ENCODE measurements at regions of chr14 and their contacts with region 1.

Region 1: DNA sequence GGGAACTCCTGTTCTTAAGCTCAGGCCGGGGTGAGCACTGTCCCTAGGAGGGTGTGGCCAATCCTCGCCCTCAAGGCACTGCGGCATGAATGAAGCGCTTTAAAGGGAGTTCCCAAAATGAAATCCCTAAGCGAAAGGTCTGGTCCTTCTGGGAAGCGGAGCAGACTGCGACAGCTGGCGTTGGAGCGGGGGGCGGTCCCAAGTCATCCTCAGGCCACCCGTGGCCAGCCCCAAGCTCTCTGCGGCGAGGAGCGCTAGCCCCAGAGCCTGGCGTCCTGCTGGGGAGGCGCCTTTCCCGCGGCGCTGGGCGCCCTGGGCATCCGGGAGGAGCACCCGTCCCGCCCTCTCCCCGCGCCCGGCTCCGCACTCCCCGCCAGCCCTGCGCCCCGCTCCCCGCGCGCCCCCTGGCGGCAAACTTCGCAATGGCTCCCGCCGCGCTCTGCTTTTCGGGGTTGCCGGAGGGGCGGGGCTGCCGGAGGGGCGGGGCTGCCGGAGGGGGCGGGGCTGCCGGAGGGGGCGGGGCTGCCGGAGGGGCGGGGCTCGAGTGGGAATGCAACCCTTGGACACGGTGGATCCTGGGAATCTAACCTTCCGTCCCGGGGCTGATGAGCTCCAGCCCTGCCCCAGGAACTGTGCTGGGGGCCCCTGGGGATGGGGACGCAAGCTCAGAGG is 25.4 kb downstream of the ZBTB42 start:
- DNase-seq: peak; percentile 88 to 97 (median 90)
- H3K4me3 ChIP-seq: peak overlapping the region; percentile 61 to 70
- H3K4me3 Mint-ChIP-seq: peak overlapping the region; percentile 66 to 93 (median 86)
- H3K27ac ChIP-seq: peak overlapping the region; percentile 14
- H3K27ac Mint-ChIP-seq: peak overlapping the region in 4 of 7 donors; percentile 29 to 92 (median 63)
- H3K4me1 ChIP-seq: peaks cover 21% of the 10 kb centered on the region
- H3K4me1 Mint-ChIP-seq: peaks cover 14 to 32% (median 24%) of the 10 kb centered on the region in 4 donors
- H3K27me3 ChIP-seq: no peaks in the 10 kb centered on the region
- H3K27me3 Mint-ChIP-seq: peaks cover 2 to 7% of the 10 kb centered on the region in 2 donors

Region 2: GRCh38 chr14:104576232-104576969 is 249.9 kb before region 1 on chr14:
- CTCF ChIA-PET with region 1: no interaction called
- POLR2A ChIA-PET with region 1: no interaction called
- intact Hi-C with region 1: no loop called
- DNase-seq: no peak
- H3K4me3 ChIP-seq: no peak overlapping the region
- H3K4me3 Mint-ChIP-seq: no peak overlapping the region
- H3K27ac ChIP-seq: no peak overlapping the region
- H3K27ac Mint-ChIP-seq: no peak overlapping the region
- H3K4me1 ChIP-seq: no peaks in the 10 kb centered on the region
- H3K4me1 Mint-ChIP-seq: no peaks in the 10 kb centered on the region
- H3K27me3 ChIP-seq: no peaks in the 10 kb centered on the region
- H3K27me3 Mint-ChIP-seq: peaks cover 4 to 8% of the 10 kb centered on the region in 2 donors

Region 3: GRCh38 chr14:104768437-104769323 is 57.6 kb before region 1 on chr14:
- CTCF ChIA-PET with region 1: interaction called, 144 read pairs
- POLR2A ChIA-PET with region 1: interaction called, 30 read pairs
- intact Hi-C with region 1: loop called (anchors 1 kb)
- DNase-seq: peak; percentile 83 to 89 (median 86)
- H3K4me3 ChIP-seq: no peak overlapping the region
- H3K4me3 Mint-ChIP-seq: no peak overlapping the region
- H3K27ac ChIP-seq: no peak overlapping the region
- H3K27ac Mint-ChIP-seq: peak overlapping the region in 4 of 7 donors; percentile 11 to 77 (median 56)
- H3K4me1 ChIP-seq: peaks cover 3% of the 10 kb centered on the region
- H3K4me1 Mint-ChIP-seq: peaks cover 0 to 4% (median under 1%) of the 10 kb centered on the region in 4 donors
- H3K27me3 ChIP-seq: no peaks in the 10 kb centered on the region
- H3K27me3 Mint-ChIP-seq: no peaks in the 10 kb centered on the region

Region 4: GRCh38 chr14:104813291-104813690 is 13.0 kb before region 1 on chr14:
- CTCF ChIA-PET with region 1: no interaction called
- POLR2A ChIA-PET with region 1: no interaction called
- intact Hi-C with region 1: no loop called
- DNase-seq: no peak
- H3K4me3 ChIP-seq: no peak overlapping the region
- H3K4me3 Mint-ChIP-seq: no peak overlapping the region
- H3K27ac ChIP-seq: no peak overlapping the region
- H3K27ac Mint-ChIP-seq: peak overlapping the region in 2 of 7 donors; percentile 18 to 68
- H3K4me1 ChIP-seq: peaks cover 29% of the 10 kb centered on the region
- H3K4me1 Mint-ChIP-seq: peaks cover 12 to 35% (median 19%) of the 10 kb centered on the region in 4 donors
- H3K27me3 ChIP-seq: no peaks in the 10 kb centered on the region
- H3K27me3 Mint-ChIP-seq: no peaks in the 10 kb centered on the region